ENCODE measurements at regions of chr9 and their contacts with region 1.

Region 1: GRCh38 chr9:23302281-23302680 is 523.8 kb downstream of the ELAVL2 start:
- DNase-seq: no peak
- ATAC-seq: no peak
- H3K4me3 ChIP-seq: no peak overlapping the region
- H3K27ac ChIP-seq: no peak overlapping the region
- H3K4me1 ChIP-seq: no peaks in the 10 kb centered on the region
- H3K27me3 ChIP-seq: no peaks in the 10 kb centered on the region
- CTCF ChIP-seq: no peak

Region 2: GRCh38 chr9:23145467-23145866 is 156.8 kb before region 1 on chr9:
- CTCF ChIA-PET with region 1: no interaction called
- POLR2A ChIA-PET with region 1: interaction called, 11 read pairs
- in situ Hi-C with region 1: no loop called
- intact Hi-C with region 1: no loop called
- DNase-seq: no peak
- ATAC-seq: no peak
- H3K4me3 ChIP-seq: no peak overlapping the region
- H3K27ac ChIP-seq: no peak overlapping the region
- H3K4me1 ChIP-seq: no peaks in the 10 kb centered on the region
- H3K27me3 ChIP-seq: no peaks in the 10 kb centered on the region
- CTCF ChIP-seq: no peak